ENCODE measurements at regions of chr22 and their contacts with region 1.

Region 1: GRCh38 chr22:23598805-23599493 is 18.9 kb upstream of the IGLL1 start:
- DNase-seq: no peak
- H3K4me3 ChIP-seq: no peak overlapping the region
- H3K4me1 ChIP-seq: no peaks in the 10 kb centered on the region
- H3K27me3 ChIP-seq: no peaks in the 10 kb centered on the region

Region 2: DNA sequence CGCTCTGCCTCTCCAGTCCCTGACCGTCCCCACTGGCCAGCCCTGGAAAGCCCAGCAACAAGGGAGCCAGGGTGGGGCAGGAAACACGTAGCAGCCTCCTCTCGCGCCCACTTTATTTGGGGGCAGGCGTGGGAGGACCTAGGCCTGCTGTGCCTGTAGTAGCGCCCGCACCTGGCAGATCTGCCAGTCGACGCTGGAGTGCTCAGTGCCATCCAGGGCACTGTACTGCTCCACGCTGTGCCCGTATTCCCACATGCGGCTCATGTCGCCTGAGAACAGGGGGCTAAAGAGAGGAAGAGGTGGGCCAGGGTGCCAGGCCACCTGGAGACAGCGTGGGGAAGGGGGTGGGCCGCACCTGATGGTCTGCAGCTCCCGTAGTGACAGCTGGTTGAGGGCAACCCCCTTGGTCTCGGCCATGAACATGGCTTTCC is 50.1 kb after region 1 on chr22:
- in situ Hi-C with region 1: no loop called
- DNase-seq: no peak
- H3K4me3 ChIP-seq: no peak overlapping the region
- H3K4me1 ChIP-seq: no peaks in the 10 kb centered on the region
- H3K27me3 ChIP-seq: no peaks in the 10 kb centered on the region

Region 3: DNA sequence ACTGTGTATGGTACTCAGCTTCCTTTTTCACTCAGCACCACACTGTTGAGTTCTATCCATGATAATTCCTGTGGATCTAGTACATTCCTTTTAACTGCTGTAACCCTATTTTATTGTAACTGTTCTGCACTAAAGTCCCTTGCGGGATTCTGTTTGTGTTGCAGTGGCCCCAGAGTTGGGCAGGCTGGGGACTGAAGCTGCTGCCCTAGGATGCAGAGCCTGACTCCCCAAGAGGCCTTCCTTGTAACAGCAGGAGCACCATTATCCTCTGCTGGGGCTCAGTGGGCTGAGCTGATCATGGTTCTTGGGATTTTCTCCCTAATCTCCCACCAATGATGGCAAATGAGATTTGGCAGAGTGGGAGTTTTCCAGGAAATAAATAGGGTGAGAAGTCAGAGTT is 489.9 kb after region 1 on chr22:
- in situ Hi-C with region 1: no loop called
- DNase-seq: no peak
- H3K4me3 ChIP-seq: no peak overlapping the region
- H3K4me1 ChIP-seq: no peaks in the 10 kb centered on the region
- H3K27me3 ChIP-seq: no peaks in the 10 kb centered on the region

Region 4: DNA sequence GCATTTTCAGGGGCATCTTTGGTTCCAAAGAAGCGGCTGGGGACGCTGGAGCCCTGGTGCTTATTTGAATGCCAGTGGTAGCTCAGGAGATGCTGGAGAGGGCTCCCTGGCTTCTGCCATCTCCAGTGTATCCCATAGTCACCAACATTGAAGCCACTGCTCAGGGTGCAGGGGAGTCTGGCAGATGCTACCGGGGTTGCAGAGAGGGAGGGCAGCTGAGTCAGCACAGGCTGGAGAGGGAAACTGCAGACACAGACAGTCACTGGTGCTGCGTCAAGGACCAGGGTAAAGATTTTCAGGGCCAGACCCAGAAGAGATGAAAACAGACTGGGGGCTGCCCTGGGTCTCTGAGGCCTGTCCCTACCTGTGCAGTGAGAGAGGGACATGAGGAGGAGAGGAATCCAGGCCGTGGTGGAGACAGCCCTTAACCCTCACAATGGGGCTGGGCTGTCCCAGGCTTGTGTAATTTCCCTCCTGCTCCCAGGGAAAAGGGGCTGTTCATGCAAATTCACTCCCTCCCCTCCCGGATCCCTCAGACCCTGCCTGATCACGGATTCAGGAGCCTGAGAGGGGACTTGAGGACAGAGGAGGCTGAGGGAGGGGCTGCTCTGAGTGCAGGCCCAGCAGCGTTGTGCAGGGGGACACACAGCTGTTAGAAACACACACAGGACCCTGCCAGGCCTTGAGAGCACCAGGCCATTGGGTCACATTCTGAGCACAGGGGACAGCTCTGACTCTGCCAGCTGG is 1838.6 kb after region 1 on chr22:
- in situ Hi-C with region 1: loop called (anchors 5 kb)
- DNase-seq: no peak
- H3K4me3 ChIP-seq: no peak overlapping the region
- H3K4me1 ChIP-seq: no peaks in the 10 kb centered on the region
- H3K27me3 ChIP-seq: no peaks in the 10 kb centered on the region